ENCODE measurements at regions of chr1 and their contacts with region 1.

Region 1: DNA sequence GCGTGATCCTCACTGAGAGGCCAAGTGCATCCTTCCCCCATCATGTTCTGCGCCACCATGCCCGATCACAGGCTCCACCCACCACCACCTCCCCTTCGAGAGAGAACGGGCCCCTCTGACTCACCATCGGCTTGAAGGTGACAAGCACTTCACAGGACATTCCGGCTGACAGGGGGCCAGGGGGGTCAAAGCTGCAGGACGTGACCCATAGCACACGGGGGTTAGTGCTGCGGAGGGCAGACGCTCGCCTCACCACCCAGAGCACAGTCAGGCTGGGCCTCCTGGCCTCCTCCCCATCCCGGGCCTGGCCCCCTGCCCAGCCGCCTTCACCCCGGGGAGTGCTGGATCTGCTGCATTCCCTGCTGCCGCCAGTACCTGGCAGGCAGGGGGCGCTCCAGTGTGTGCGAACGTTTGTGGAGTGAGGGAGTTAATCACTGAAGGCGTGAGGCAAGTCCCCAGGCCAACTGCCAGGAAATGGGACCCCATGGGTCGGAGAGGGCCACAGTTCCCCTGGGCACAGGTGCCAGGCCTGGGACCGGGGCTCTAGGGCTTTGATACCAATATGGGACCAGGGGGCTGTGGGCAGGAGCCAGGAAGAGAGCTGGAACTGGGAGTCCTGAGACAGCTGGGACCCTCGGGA is 40.9 kb upstream of the TMEM52 start:
- DNase-seq: peak; percentile 96
- ATAC-seq: peak; percentile 89
- H3K4me3 Mint-ChIP-seq: peak overlapping the region; percentile 49
- H3K27ac Mint-ChIP-seq: no peak overlapping the region; the same call in 1 of the 2 replicates
- H3K4me1 Mint-ChIP-seq: peaks cover 20% of the 10 kb centered on the region
- H3K27me3 Mint-ChIP-seq: no peaks in the 10 kb centered on the region; the same call in none of the 2 replicates
- CTCF ChIP-seq: peak; percentile 90

Region 2: GRCh38 chr1:2003278-2004131 is 43.5 kb after region 1 on chr1 and contains the start of gene CFAP74:
- CTCF ChIA-PET with region 1: interaction called, 11 read pairs
- POLR2A ChIA-PET with region 1: no interaction called
- DNase-seq: peak; percentile 89
- ATAC-seq: peak; percentile 91
- H3K4me3 Mint-ChIP-seq: peak within 1 kb of the TSS; percentile 60
- H3K27ac Mint-ChIP-seq: no peak within 1 kb of the TSS
- H3K4me1 Mint-ChIP-seq: no peaks in the 10 kb centered on the region
- H3K27me3 Mint-ChIP-seq: no peaks in the 10 kb centered on the region; the same call in 1 of the 2 replicates
- CTCF ChIP-seq: no peak
- total RNA-seq, gene CFAP74: 0.34 to 0.39 TPM (median 0.35 TPM) in 3 replicates

Region 3: GRCh38 chr1:2009101-2010053 is 49.4 kb after region 1 on chr1:
- CTCF ChIA-PET with region 1: interaction called, 11 read pairs
- POLR2A ChIA-PET with region 1: no interaction called
- DNase-seq: no peak
- ATAC-seq: no peak
- H3K4me3 Mint-ChIP-seq: no peak overlapping the region
- H3K27ac Mint-ChIP-seq: no peak overlapping the region
- H3K4me1 Mint-ChIP-seq: no peaks in the 10 kb centered on the region
- H3K27me3 Mint-ChIP-seq: no peaks in the 10 kb centered on the region
- CTCF ChIP-seq: no peak

Region 4: GRCh38 chr1:2019172-2019543 is 59.2 kb after region 1 on chr1 and contains the start of gene GABRD:
- CTCF ChIA-PET with region 1: interaction called, 15 read pairs
- POLR2A ChIA-PET with region 1: no interaction called
- DNase-seq: peak; percentile 51
- ATAC-seq: peak; percentile 56
- H3K4me3 Mint-ChIP-seq: peak within 1 kb of the TSS; percentile 79
- H3K27ac Mint-ChIP-seq: peak within 1 kb of the TSS; percentile 65; the same call in 1 of the 2 replicates
- H3K4me1 Mint-ChIP-seq: peaks cover 8% of the 10 kb centered on the region
- H3K27me3 Mint-ChIP-seq: peaks cover 31% of the 10 kb centered on the region
- CTCF ChIP-seq: no peak
- total RNA-seq, gene GABRD: 1.7 to 2.0 TPM (median 1.8 TPM) in 3 replicates

Measured in WTC11 (cell line).